Head of caudate nucleus (tissue), 42 donors: ENCODE measurements at regions of chr20 and their contacts with region 1.

Region 1: GRCh38 chr20:34312544-34313217 is 9.5 kb upstream of the AHCY start:
- DNase-seq: peak; percentile 84 to 97 (median 92)

Region 2: GRCh38 chr20:34475979-34476736 is 163.5 kb after region 1 on chr20:
- intact Hi-C with region 1: loop called (anchors 2 kb)
- DNase-seq: peak; percentile 23 to 86 (median 67)

Region 3: DNA sequence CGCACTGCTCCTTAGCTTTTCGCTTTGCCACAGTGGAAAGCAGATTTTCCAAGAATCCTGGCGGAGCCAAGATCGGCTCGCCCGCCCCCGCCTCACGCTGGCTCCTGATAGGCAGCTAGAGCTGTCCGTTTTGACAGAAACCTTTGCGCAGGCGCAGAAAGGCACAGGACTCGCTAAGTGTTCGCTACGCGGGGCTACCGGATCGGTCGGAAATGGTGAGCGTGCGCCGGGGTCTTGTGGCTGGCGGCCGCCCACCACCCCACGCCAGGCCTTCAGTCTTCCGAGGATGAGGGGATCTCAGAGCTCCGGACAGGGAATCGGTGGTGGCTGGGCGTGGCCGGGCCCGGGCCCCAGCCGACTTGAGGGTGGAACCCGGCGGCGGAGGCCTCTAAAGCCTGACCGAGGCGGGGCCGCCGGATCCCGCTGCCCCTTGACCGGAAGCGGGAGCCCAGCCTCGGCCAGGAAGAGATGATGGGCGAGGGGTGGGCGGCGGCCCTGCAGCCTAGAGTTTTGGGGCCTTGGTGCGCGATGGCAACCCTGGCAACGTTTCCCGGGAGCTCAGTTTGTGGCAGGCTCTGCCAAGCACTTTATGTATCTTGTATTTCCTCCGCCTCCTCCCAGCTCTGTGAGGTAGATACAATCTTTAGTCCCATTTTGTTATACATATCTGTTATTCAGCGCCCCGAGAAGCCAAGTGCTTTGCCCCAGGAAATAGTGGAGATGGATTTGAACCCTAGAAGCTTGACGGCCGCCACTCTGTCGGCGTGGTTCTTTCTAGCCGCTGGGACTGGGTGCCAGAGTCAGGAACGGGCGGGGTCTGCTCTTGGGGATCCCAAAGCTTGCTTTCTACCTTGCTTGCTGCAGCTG is 203.8 kb after region 1 on chr20 and contains the start of gene DYNLRB1:
- intact Hi-C with region 1: loop called (anchors 10 kb)
- DNase-seq: peak; percentile 94 to 99 (median 97)